ENCODE measurements at regions of chr3 and their contacts with region 1.

Region 1: DNA sequence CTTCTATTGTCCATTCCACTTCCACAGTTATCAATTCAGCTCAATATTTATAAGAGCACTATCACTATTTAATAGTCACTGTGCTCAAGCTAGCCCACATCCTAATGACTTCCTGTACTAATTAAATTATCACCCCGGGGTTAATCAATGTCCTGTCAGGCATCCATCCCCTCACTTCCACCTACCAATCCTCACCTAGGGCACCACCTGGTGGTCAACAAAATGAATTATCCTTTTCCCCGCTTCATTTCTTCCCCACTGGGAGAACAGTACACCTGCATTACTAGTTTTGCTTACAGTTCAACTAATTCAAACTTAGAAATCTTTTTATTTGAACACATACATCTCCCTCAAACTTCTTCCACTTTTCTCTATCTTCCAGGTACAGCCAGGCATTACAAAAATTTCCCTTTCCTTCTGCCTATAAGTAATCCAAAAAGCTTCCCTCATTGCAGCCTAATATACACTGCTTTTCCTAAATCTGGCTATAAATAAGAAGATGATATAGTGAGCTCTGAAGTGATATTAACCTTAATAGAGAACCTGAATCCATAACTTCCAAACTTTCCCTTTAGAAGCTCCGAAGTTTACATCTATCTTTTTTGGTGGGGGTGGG is 68.5 kb downstream of the TMCC1 start:
- DNase-seq: peak; percentile 18 to 39 (median 35)
- ATAC-seq: peak; percentile 62
- H3K4me3 ChIP-seq: no peak overlapping the region
- H3K27ac ChIP-seq: no peak overlapping the region
- H3K4me1 ChIP-seq: no peaks in the 10 kb centered on the region
- H3K27me3 ChIP-seq: no peaks in the 10 kb centered on the region
- CTCF ChIP-seq: peak; percentile 48 to 73 (median 65)
- POLR2A ChIP-seq: no peak

Region 2: GRCh38 chr3:129485721-129486673 is 339.0 kb before region 1 on chr3:
- intact Hi-C with region 1: loop called (anchors 10 kb)
- DNase-seq: peak; percentile 48 to 85 (median 58)
- ATAC-seq: peak; percentile 54
- H3K4me3 ChIP-seq: no peak overlapping the region
- H3K27ac ChIP-seq: peak overlapping the region in 2 of 4 donors; percentile 26 to 64
- H3K4me1 ChIP-seq: peaks cover 6% of the 10 kb centered on the region
- H3K27me3 ChIP-seq: no peaks in the 10 kb centered on the region
- CTCF ChIP-seq: no peak
- POLR2A ChIP-seq: no peak

Region 3: DNA sequence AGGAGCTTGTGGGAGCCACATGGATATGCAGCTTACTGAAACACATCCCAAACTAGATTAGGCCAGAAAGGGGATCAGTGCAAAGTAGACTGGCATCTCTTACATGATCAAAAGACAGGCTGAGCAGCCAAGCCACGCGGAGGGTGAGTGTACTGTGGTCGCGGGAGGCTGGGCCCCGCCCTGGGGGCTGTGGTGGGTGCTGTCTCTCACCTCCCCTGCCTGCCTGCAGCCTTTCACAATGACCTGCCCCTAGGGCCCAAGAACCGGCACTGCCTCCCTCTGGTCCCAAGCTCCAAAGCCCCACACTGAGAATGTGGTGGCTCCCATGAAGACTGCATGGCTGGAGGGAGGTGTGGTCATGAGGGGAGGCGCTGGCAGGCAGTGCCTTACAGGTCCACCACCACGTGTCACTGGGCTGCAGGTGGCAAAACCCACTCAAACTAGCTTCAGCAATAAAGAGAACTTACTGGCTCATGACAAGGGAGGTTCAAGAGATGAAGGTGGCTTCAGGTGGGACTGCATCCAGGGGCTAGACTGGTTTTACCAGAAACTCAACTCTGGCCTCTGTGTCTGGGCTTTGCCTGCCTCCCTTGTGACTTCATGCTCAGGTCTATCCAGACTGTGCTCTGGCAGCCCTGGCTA is 191.2 kb before region 1 on chr3:
- intact Hi-C with region 1: loop called (anchors 5 kb)
- DNase-seq: no peak
- ATAC-seq: no peak
- H3K4me3 ChIP-seq: no peak overlapping the region
- H3K27ac ChIP-seq: no peak overlapping the region
- H3K4me1 ChIP-seq: no peaks in the 10 kb centered on the region
- H3K27me3 ChIP-seq: no peaks in the 10 kb centered on the region
- CTCF ChIP-seq: no peak
- POLR2A ChIP-seq: no peak

Region 4: GRCh38 chr3:129768728-129769127 is 56.3 kb before region 1 on chr3:
- intact Hi-C with region 1: no loop called
- DNase-seq: no peak
- ATAC-seq: no peak
- H3K4me3 ChIP-seq: no peak overlapping the region
- H3K27ac ChIP-seq: no peak overlapping the region
- H3K4me1 ChIP-seq: peaks cover 4% of the 10 kb centered on the region
- H3K27me3 ChIP-seq: no peaks in the 10 kb centered on the region
- CTCF ChIP-seq: no peak
- POLR2A ChIP-seq: no peak